Uterus (tissue), 4 donors: ENCODE measurements at regions of chr1 and their contacts with region 1.

Region 1: DNA sequence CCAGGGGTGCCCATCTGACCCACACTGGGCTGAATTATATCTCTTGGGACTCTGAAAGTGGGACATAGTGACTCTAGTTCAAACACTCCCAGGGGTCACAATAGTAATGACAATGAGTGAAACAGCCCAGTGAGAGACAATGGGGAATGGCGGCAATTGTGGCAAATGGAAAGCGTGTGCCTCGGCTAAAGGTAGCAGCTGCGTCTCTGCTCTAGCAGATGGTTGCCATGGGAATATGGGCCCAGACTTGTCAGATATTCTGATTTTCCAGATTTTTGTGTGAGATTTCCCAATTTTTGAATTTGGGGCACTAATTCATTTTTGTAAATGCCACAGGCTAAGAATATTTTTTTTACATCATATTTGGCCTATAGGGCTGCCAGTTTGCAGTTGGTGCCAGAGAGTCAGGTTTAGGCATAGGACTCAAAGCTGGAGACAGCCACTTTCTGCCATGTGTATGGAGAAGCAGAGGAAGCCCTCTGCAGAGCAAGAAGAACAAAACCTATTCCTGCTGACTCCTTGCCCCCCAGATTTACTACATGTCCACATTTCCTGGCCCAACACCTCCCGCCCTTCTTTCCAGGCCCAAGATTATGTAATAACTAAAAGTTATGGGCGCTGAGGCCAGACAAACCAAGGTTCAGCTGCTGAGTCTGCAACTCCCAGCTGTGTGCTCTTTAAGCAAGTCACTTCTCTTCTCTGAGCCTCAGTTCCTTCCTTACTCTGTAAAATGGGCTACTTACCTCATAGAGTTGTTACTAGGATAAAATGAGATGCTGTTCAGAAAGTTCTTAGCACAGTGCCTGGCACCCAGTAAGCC is 21.6 kb upstream of the PTP4A2 start:
- DNase-seq: peak in 1 of 2 donors; percentile 52
- H3K4me3 ChIP-seq: no peak overlapping the region
- H3K27ac ChIP-seq: no peak overlapping the region
- H3K4me1 ChIP-seq: peaks cover 0 to 8% of the 10 kb centered on the region in 2 donors
- H3K27me3 ChIP-seq: no peaks in the 10 kb centered on the region
- CTCF ChIP-seq: no peak
- POLR2A ChIP-seq: no peak

Region 2: DNA sequence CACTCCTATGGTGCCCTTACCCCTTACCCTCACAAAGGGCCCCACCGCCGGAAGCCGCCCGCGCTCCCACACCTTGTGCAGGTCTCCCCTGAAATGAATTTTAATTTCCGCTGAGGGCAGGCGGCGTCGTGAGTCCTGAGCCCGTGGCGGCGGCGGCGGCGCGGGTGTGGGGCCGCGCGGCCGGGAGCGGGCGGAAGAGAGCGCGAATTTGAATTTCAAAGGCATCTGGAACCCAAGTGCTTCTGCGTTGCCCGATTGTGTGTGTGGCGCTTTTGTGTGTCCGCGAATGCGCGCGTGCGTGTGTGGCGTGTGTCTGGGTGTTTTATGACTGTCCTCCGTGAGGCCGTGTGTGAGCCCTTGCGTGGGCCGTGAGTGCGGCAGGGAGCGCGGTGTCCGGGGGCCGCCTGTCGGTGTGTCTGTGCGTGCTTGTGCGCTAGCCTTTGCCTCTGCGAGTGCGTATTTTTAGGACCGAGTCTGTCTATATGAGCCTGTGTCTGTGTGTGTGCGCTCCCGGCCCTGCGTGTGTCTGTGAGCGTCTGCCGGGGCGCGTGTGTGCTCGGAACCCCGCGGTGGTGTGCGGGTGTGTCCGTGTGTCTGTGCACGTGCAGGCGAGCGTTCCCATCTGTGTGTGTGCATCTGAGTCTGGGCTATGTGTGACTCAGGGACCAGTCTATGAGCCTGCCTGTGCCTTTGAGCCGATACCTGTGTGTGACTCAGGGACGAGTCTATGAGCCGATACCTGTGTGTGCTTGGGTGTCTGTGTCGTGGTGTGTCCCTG is 187.7 kb before region 1 on chr1:
- intact Hi-C with region 1: loop called (anchors 10 kb)
- DNase-seq: no peak
- H3K4me3 ChIP-seq: no peak overlapping the region
- H3K27ac ChIP-seq: no peak overlapping the region
- H3K4me1 ChIP-seq: peaks cover 0 to 11% of the 10 kb centered on the region in 2 donors
- H3K27me3 ChIP-seq: peaks cover 4 to 17% of the 10 kb centered on the region in 2 donors
- CTCF ChIP-seq: no peak
- POLR2A ChIP-seq: no peak

Region 3: GRCh38 chr1:31843506-31843905 is 116.2 kb before region 1 on chr1:
- intact Hi-C with region 1: no loop called
- DNase-seq: no peak
- H3K4me3 ChIP-seq: no peak overlapping the region
- H3K27ac ChIP-seq: no peak overlapping the region
- H3K4me1 ChIP-seq: no peaks in the 10 kb centered on the region
- H3K27me3 ChIP-seq: no peaks in the 10 kb centered on the region
- CTCF ChIP-seq: no peak
- POLR2A ChIP-seq: no peak

Region 4: GRCh38 chr1:32128479-32128878 is 168.7 kb after region 1 on chr1:
- intact Hi-C with region 1: no loop called
- DNase-seq: no peak
- H3K4me3 ChIP-seq: no peak overlapping the region
- H3K27ac ChIP-seq: no peak overlapping the region
- H3K4me1 ChIP-seq: no peaks in the 10 kb centered on the region
- H3K27me3 ChIP-seq: no peaks in the 10 kb centered on the region
- CTCF ChIP-seq: no peak
- POLR2A ChIP-seq: no peak

Region 5: GRCh38 chr1:32215629-32216480 is 256.1 kb after region 1 on chr1:
- intact Hi-C with region 1: no loop called
- DNase-seq: peak; percentile 41 to 42
- H3K4me3 ChIP-seq: no peak overlapping the region
- H3K27ac ChIP-seq: no peak overlapping the region
- H3K4me1 ChIP-seq: peaks cover 1 to 3% of the 10 kb centered on the region in 2 donors
- H3K27me3 ChIP-seq: no peaks in the 10 kb centered on the region
- CTCF ChIP-seq: peak; percentile 47 to 72 (median 59)
- POLR2A ChIP-seq: no peak